ENCODE measurements at regions of chr17 and their contacts with region 1.

Region 1: DNA sequence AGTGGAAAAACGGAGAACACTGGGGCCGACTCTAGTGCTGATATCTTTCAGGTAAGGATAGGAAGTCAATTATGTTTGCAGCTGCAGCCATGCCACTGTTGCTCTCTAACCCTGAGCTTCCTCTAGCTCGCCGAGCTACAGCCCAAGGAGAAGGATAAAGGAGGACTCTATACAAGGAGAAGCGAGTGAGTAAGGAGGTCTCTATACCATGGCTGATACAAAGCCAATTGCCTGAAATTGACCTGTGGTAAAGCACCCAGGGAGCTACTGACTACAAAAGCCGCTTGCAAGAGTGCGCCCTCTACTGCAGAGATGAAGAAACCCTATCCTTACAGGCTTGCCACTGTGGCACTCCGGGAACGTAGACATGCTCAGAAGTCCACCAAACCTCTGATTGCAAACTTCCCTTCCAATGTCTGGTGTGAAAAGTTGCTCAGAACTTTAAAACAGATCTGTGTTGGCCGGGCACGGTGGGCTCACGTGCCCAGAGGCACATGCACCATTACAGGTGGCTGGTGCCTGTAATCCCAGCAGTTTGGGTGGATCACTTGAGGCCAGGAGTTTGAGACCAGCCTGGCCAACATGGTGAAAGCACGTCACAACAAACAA is 10.8 kb upstream of the SLC46A1 start:
- DNase-seq: no peak
- ATAC-seq: peak; percentile 66 to 68
- H3K4me3 ChIP-seq: no peak overlapping the region
- H3K27ac ChIP-seq: no peak overlapping the region
- H3K4me1 ChIP-seq: no peaks in the 10 kb centered on the region
- H3K27me3 ChIP-seq: no peaks in the 10 kb centered on the region
- CTCF ChIP-seq: peak in 2 of 5 experiments; percentile 27 to 54
- POLR2A ChIP-seq: no peak

Region 2: GRCh38 chr17:28227316-28228125 is 189.3 kb before region 1 on chr17:
- in situ Hi-C with region 1: loop called in 1 of 4 experiments (anchors 25 kb)
- intact Hi-C with region 1: no loop called
- DNase-seq: no peak
- ATAC-seq: no peak
- H3K4me3 ChIP-seq: peak overlapping the region; percentile 17 to 36 (median 30)
- H3K27ac ChIP-seq: no peak overlapping the region
- H3K4me1 ChIP-seq: peaks cover 0 to 5% of the 10 kb centered on the region in 2 donors
- H3K27me3 ChIP-seq: peaks cover 38 to 50% (median 42%) of the 10 kb centered on the region in 3 donors
- CTCF ChIP-seq: no peak
- POLR2A ChIP-seq: no peak

Region 3: GRCh38 chr17:28524476-28525368 is 107.9 kb after region 1 on chr17:
- in situ Hi-C with region 1: loop called in 1 of 4 experiments (anchors 25 kb)
- intact Hi-C with region 1: no loop called
- DNase-seq: no peak
- ATAC-seq: no peak
- H3K4me3 ChIP-seq: no peak overlapping the region
- H3K27ac ChIP-seq: no peak overlapping the region
- H3K4me1 ChIP-seq: no peaks in the 10 kb centered on the region
- H3K27me3 ChIP-seq: no peaks in the 10 kb centered on the region
- CTCF ChIP-seq: no peak
- POLR2A ChIP-seq: no peak